Psoas muscle (tissue), 8 donors: ENCODE measurements at regions of chr12 and their contacts with region 1.

Region 1: DNA sequence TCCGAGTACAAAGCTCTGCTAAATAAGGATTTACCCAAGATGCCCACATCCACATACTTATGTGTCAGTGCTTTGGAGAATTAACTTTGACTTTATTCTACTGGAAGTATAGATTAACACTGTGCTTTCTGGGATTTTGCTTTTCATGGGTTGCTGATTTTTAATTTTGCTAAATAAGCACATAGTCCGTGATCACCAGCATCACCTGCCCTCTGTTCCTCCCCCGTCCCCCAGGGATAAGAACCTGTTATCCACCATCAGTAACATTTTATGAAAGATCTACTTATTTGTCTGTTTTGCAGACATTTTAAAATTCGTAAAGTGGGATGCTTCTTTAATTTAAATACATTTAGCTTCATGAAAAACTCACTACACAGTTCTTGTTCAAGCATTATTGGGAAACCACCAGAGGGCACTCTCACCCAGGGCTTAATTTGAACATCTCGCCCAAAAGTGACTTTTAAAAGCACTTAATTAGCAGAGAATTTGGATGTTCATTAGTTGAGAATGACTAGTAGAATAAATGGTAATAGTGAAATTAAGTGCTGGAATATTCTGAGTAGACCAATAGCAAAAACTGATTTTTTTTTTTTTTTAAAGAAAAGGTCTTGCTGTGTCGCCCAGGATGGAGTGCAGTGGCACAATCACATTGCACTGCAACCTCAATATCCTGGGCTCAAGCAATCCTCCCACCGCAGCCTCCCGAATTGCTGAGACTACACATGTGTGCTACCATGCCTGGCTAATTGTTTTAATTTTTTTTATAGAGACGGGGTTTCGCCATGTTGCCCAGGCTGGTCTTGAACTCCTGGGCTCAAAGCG is 35.7 kb downstream of the MRPL42 start:
- DNase-seq: no peak
- ATAC-seq: peak in 1 of 4 donors; percentile 58
- H3K4me3 ChIP-seq: no peak overlapping the region
- H3K27ac ChIP-seq: no peak overlapping the region
- H3K4me1 ChIP-seq: no peaks in the 10 kb centered on the region
- H3K27me3 ChIP-seq: no peaks in the 10 kb centered on the region
- CTCF ChIP-seq: peak; percentile 86

Region 2: GRCh38 chr12:93243689-93244513 is 259.1 kb before region 1 on chr12:
- intact Hi-C with region 1: no loop called
- DNase-seq: no peak
- ATAC-seq: peak; percentile 67 to 92 (median 86)
- H3K4me3 ChIP-seq: no peak overlapping the region
- H3K27ac ChIP-seq: peak overlapping the region; percentile 56
- H3K4me1 ChIP-seq: peaks cover 21% of the 10 kb centered on the region
- H3K27me3 ChIP-seq: no peaks in the 10 kb centered on the region
- CTCF ChIP-seq: no peak

Region 3: GRCh38 chr12:93603762-93604161 is 100.7 kb after region 1 on chr12:
- intact Hi-C with region 1: loop called in 1 of 2 experiments (anchors 1 kb)
- DNase-seq: no peak
- ATAC-seq: no peak
- H3K4me3 ChIP-seq: no peak overlapping the region
- H3K27ac ChIP-seq: peak overlapping the region; percentile 49
- H3K4me1 ChIP-seq: peaks cover 18% of the 10 kb centered on the region
- H3K27me3 ChIP-seq: no peaks in the 10 kb centered on the region
- CTCF ChIP-seq: no peak

Region 4: GRCh38 chr12:94101738-94102660 is 599.0 kb after region 1 on chr12:
- intact Hi-C with region 1: loop called (anchors 2 kb)
- DNase-seq: peak; percentile 82 to 89
- ATAC-seq: peak; percentile 83 to 92 (median 84)
- H3K4me3 ChIP-seq: peak overlapping the region; percentile 72
- H3K27ac ChIP-seq: no peak overlapping the region
- H3K4me1 ChIP-seq: peaks cover 6% of the 10 kb centered on the region
- H3K27me3 ChIP-seq: peaks cover 0 to 3% (median 0%) of the 10 kb centered on the region in 3 donors
- CTCF ChIP-seq: peak; percentile 84